Posterior vena cava (tissue), 2 donors: ENCODE measurements at regions of chr9 and their contacts with region 1.

Region 1: GRCh38 chr9:96486368-96487028 is 36.5 kb downstream of the HABP4 start:
- DNase-seq: no peak

Region 2: DNA sequence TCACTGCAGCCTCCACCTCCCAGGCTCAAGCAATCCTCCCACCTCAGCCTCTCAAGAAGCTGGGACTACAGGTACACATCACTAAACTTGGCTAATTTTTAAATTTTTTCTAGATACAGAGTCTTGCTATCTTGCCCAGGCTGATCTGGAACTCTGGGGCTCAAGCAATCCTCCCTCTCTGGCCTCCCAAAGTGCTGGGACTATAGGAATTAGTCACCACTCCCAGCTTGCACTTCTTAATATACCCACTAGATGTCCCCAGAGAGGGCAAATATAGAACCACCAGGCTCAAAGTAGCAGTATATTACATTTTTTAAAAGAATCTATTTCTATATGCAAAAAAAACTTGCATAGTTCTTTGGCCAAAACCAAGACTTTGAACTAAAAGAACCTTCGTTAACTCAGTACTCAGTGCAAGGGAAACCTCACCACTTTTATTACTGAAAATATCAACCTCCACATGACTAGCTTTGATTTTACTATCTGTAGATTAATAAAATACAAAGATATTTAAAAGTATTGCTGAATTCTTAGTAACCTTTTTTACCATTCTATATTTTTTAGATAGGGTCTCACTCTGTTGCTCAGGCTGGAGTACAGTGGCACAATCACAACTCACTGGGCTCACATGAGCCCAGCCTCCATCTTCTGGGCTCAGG is 158.7 kb before region 1 on chr9:
- intact Hi-C with region 1: loop called in 1 of 2 experiments (anchors 10 kb)
- DNase-seq: no peak

Region 3: DNA sequence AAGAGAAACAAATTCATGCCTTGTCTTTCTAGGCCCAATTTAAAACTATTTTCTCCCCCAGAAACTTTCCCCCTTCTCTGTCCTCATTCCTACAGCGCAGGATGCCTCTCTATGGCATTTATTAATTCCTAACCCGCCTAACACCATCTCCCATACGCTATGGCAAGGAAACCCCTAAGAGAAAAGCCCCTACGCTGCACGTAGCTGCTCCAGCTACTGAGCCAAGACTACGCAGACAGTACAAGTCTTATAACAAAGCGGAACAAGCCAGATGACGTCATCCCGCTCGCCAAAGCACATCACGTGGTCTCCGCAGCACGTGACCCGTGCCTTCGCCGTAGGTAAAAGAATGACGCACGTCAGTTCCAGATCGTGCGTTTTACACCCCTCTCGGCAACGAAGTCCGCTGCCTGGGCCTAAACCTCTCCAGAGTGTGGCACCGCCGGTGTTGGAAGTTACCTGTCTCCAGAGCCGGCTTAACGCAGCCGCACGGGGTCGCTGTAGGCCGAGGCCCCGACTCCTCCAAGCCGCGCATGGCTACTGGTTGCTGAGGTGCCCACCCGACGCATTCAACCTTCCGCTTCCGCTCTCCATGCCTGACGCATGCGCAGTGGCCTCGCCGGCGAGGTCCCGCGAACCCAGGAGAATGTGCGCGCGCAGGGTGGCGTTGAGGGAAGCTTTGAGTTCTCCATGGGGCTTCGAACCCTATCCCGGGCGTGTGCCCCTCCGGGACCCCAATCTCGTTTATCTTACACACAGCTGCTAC is 1435.6 kb after region 1 on chr9 and contains the start of gene TRMO:
- intact Hi-C with region 1: no loop called
- DNase-seq: peak; percentile 99
- total RNA-seq, gene TRMO: 7.0 to 8.7 TPM